Activated CD8-positive, alpha-beta T cell treated with anti-CD3 and anti-CD28 coated beads for 36 hours (primary cell): ENCODE measurements at regions of chr10 and their contacts with region 1.

Region 1: GRCh38 chr10:91923371-91924211 is at the start of gene BTAF1:
- DNase-seq: peak; percentile 95
- ATAC-seq: peak; percentile 95
- H3K4me3 Mint-ChIP-seq: peak within 1 kb of the TSS; percentile 95
- H3K27ac Mint-ChIP-seq: peak within 1 kb of the TSS; percentile 99
- H3K4me1 Mint-ChIP-seq: peaks cover 35% of the 10 kb centered on the region
- H3K27me3 Mint-ChIP-seq: peaks cover 2% of the 10 kb centered on the region
- CTCF ChIP-seq: no peak
- total RNA-seq, gene BTAF1: 73.4 to 75.3 TPM

Region 2: DNA sequence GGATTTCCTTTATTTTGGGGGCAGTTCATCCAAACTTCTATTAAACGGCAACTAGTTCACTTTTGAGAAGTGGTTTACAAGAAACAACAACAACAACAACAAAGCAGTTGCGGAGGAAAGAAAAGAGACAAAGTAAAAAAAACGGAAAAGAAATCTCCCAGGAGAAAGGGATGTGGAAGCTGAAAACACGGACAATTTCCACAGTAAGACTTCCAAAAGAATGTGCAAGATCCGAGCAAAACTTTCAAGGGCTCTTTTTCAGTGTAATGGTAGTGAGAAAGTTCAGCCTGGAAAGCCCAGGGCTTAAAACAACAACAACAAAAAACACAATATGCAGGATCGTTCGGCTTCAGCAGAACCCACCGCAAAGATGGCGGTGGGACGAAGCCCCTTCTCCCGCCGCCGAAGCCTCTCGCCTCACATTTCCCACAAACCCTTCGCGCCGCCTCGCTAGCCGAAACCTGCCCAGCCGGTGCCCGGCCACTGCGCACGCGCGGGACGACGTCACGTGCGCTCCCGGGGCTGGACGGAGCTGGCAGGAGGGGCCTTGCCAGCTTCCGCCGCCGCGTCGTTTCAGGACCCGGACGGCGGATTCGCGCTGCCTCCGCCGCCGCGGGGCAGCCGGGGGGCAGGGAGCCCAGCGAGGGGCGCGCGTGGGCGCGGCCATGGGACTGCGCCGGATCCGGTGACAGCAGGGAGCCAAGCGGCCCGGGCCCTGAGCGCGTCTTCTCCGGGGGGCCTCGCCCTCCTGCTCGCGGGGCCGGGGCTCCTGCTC is 125.5 kb before region 1 on chr10 and contains the start of gene TNKS2:
- CTCF ChIA-PET with region 1: interaction called, 7 read pairs
- POLR2A ChIA-PET with region 1: interaction called, 12 read pairs
- intact Hi-C with region 1: no loop called
- DNase-seq: peak; percentile 93
- ATAC-seq: peak; percentile 67
- H3K4me3 Mint-ChIP-seq: peak within 1 kb of the TSS; percentile 89
- H3K27ac Mint-ChIP-seq: peak within 1 kb of the TSS; percentile 99
- H3K4me1 Mint-ChIP-seq: peaks cover 51% of the 10 kb centered on the region
- H3K27me3 Mint-ChIP-seq: no peaks in the 10 kb centered on the region
- CTCF ChIP-seq: no peak
- total RNA-seq, gene TNKS2: 22.1 to 22.8 TPM

Region 3: DNA sequence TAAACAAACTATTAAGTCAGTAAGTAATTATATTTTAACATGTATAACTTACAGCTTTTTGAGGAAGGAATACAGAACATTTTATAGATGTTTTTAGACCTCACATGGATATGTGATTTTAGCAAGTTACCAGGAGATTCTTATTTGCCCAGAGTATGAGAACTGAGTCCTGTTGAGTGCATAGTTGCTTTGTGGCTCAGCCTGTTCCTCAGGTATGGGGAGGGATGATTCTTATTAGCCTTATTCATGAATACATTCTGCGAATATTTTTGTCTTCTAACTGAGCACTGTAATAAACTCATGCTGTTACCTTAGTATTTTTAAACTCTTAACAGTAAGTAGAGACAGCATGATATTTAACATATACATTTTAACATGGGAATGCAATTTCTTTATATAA is 17.8 kb after region 1 on chr10:
- CTCF ChIA-PET with region 1: interaction called, 3 read pairs
- POLR2A ChIA-PET with region 1: interaction called, 10 read pairs
- intact Hi-C with region 1: no loop called
- DNase-seq: no peak
- ATAC-seq: no peak
- H3K4me3 Mint-ChIP-seq: no peak overlapping the region
- H3K27ac Mint-ChIP-seq: no peak overlapping the region
- H3K4me1 Mint-ChIP-seq: peaks cover 36% of the 10 kb centered on the region
- H3K27me3 Mint-ChIP-seq: no peaks in the 10 kb centered on the region
- CTCF ChIP-seq: no peak

Region 4: DNA sequence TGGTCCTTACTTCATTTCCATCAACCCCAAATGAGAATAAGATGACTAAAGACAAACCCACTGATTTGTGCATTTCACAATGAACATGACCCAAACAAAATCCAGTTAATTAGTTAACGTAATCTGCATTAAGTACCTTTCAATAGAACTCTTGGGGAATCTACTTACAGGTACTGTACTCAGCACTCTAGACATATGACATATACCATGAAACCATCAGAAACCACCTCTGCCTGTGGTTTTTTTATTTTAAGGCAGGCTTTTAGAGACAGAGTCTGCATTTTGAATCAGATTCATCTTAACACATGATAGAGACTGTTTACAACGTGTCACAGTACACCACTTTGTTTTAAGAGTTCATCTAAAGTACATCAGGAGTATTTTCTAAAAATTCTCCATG is 168.4 kb after region 1 on chr10:
- CTCF ChIA-PET with region 1: no interaction called
- POLR2A ChIA-PET with region 1: no interaction called
- intact Hi-C with region 1: no loop called
- DNase-seq: no peak
- ATAC-seq: no peak
- H3K4me3 Mint-ChIP-seq: no peak overlapping the region
- H3K27ac Mint-ChIP-seq: no peak overlapping the region
- H3K4me1 Mint-ChIP-seq: peaks cover 4% of the 10 kb centered on the region
- H3K27me3 Mint-ChIP-seq: no peaks in the 10 kb centered on the region
- CTCF ChIP-seq: no peak